ENCODE measurements at regions of chr1 and their contacts with region 1.

Region 1: DNA sequence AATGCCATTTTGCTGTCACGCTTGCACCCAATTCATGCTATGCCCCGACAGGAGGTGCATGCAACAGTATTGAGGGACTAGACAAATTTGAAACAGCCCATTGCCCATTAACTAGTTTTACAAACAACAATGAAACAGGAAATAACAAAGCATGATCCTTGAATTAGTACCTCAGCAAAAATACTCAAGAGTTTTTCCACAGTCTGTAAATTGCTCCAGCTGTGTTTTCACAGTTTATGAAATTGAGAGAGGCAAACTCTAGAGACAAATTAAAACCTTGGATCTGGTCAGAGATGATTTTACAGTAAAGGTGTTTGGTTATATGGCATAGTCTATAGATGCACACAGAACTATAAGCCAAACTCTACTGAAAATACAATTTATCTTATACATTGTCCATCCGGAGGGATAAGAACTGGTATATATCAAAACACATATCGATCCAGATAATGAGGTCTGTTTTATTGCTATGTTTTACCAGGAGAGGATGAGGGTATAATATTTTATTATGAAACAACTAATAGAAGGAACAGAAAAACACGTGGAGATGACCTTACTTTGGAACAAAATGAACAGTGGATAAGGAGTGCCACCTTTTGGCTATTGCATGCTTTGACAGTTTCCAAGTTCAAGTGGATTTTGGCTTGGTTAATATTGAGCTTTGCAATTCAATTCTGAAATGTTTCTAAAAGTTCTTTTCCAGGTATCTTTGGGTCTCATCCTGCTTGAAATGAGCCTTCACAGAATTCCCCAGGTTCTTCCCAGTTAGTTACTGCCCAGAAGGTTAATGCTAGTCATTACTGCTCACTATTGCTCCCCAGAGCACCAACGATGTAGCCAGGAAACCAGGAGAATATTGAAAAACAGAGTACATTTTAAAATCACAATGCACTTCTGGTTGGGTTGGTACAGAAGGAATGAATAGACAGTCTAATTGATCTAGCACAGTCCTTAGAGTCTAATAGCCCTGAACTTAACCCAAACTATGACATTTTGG is 45.7 kb downstream of the ZC3H11B start:
- DNase-seq: no peak
- H3K4me3 ChIP-seq: no peak overlapping the region
- H3K27ac ChIP-seq: peak overlapping the region in 1 of 2 donors; percentile 6
- H3K4me1 ChIP-seq: no peaks in the 10 kb centered on the region
- H3K27me3 ChIP-seq: no peaks in the 10 kb centered on the region
- CTCF ChIP-seq: peak in 3 of 4 experiments; percentile 48 to 62 (median 49)
- POLR2A ChIP-seq: no peak

Region 2: DNA sequence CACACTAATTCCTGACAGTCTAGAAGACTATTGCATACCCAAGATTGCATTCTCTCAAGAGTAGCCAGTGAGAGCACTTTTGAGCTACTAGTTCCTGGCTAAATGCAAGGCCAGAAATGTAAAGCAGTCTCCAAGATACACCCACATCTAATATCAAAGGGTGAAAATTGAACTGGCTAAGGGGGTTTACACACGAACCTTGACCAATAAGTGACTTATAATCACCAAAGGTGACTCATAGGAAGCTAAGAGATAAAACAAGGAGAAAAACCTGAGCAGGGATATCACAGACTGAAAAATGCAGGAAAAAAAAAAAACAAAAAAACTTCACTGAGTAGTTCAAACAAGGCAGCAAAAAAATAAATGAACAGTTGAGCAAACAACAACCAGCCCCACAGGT is 1454.4 kb before region 1 on chr1:
- intact Hi-C with region 1: no loop called
- DNase-seq: no peak
- H3K4me3 ChIP-seq: no peak overlapping the region
- H3K27ac ChIP-seq: no peak overlapping the region
- H3K4me1 ChIP-seq: no peaks in the 10 kb centered on the region
- H3K27me3 ChIP-seq: no peaks in the 10 kb centered on the region
- CTCF ChIP-seq: no peak
- POLR2A ChIP-seq: no peak

Region 3: DNA sequence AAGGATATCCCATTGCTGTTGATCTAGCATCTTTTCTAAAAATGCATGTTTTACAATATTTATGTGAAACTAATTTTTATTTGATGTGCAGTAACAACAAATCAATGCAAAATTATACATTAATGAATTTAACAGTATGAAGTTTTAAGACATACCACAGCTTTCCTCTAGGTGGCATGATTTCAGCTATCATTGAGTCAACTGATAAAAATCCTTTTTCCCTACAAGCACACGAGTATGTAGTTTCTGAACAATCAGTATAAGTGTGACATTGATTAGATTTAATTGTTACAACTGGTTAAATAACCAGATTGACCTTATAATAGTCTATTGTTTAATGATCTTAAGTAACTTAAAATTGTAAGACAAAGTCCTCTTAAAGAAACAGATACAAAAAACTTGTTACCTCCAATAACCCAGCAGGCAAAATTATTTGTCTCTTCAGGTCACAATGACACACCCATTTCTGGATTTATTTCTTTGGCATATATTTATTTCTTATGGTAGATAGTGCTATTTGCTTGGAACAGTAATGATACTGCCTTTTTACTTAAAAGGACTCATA is 1227.9 kb before region 1 on chr1:
- intact Hi-C with region 1: loop called (anchors 2 kb)
- DNase-seq: no peak
- H3K4me3 ChIP-seq: no peak overlapping the region
- H3K27ac ChIP-seq: no peak overlapping the region
- H3K4me1 ChIP-seq: no peaks in the 10 kb centered on the region
- H3K27me3 ChIP-seq: no peaks in the 10 kb centered on the region
- CTCF ChIP-seq: peak; percentile 34 to 84 (median 68)
- POLR2A ChIP-seq: no peak

Region 4: GRCh38 chr1:218686258-218686657 is 881.0 kb before region 1 on chr1:
- intact Hi-C with region 1: loop called (anchors 10 kb)
- DNase-seq: no peak
- H3K4me3 ChIP-seq: no peak overlapping the region
- H3K27ac ChIP-seq: no peak overlapping the region
- H3K4me1 ChIP-seq: no peaks in the 10 kb centered on the region
- H3K27me3 ChIP-seq: no peaks in the 10 kb centered on the region
- CTCF ChIP-seq: no peak
- POLR2A ChIP-seq: no peak

Region 5: DNA sequence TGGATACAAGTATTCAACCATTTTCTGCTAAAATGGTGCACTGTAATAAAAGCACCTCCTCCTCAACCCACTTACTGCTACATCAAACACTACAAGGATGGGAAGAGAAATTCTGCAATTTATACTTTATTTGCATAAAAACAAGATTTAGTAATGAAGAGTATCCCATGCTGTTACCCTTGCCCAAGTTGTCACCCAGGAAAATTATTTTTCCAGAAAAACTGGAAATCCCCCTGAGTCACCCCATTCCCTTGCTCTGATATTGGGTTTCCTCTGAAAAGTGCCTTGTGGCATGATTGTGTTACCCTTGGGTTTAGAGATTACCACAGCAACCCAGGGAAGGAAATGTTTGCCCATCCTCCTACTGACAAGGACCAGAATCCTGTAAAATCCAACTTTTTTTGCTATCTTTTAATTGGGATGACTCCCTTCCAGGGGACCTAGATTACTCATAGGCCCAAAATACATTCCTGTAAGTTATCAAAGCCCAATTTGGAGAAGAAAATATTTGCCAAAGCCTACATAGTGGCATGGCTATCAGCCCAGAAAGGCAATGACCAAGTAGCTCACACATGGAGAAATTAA is 62.1 kb after region 1 on chr1:
- intact Hi-C with region 1: no loop called
- DNase-seq: no peak
- H3K4me3 ChIP-seq: no peak overlapping the region
- H3K27ac ChIP-seq: no peak overlapping the region
- H3K4me1 ChIP-seq: no peaks in the 10 kb centered on the region
- H3K27me3 ChIP-seq: no peaks in the 10 kb centered on the region
- CTCF ChIP-seq: no peak
- POLR2A ChIP-seq: no peak

Region 6: DNA sequence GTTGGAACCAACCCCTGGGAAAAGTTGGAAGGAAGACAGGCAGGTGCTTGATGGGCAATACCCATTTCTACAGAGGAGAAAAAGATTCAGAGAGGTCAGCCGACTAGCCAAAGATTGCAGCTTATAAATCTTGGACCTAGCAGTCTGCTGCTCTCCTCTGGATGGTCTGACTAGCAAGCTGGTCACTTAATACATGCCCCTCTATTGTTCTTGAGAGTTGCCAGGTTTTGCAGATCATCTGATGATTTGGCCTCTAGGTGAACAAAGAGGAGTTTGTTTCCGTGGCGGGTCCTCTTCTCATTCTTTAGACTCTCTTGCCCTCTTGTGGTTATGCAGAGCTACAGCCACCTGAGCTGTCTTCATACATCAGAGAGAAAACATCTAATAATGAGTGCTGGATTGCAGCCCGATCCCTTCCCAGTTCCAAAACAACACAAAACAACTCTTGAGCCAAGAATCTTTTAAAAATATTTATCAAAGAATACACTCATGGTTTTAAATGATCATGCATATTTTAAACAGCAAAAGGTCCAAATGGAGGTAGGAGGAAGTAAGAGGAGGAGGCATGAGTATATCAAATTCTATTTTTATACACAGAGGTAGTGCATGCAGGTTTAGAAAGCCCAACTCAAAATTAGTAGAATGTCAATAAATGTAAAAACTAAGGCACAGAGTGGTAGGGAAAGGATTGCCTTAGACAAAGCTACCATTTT is 245.4 kb after region 1 on chr1:
- intact Hi-C with region 1: loop called (anchors 10 kb)
- DNase-seq: peak; percentile 13
- H3K4me3 ChIP-seq: no peak overlapping the region
- H3K27ac ChIP-seq: no peak overlapping the region
- H3K4me1 ChIP-seq: no peaks in the 10 kb centered on the region
- H3K27me3 ChIP-seq: no peaks in the 10 kb centered on the region
- CTCF ChIP-seq: peak; percentile 42 to 80 (median 68)
- POLR2A ChIP-seq: no peak

Measured in prostate gland (tissue), 2 donors.